Activated CD4-positive, alpha-beta memory T cell treated with anti-CD3 and anti-CD28 coated beads for 36 hours (primary cell): ENCODE measurements at regions of chr3 and their contacts with region 1.

Region 1: GRCh38 chr3:170055209-170055608 is 17.4 kb downstream of the GPR160 start:
- DNase-seq: peak; percentile 50
- H3K4me3 Mint-ChIP-seq: no peak overlapping the region
- H3K27ac Mint-ChIP-seq: no peak overlapping the region
- H3K4me1 Mint-ChIP-seq: peaks cover 41% of the 10 kb centered on the region
- H3K27me3 Mint-ChIP-seq: no peaks in the 10 kb centered on the region

Region 2: DNA sequence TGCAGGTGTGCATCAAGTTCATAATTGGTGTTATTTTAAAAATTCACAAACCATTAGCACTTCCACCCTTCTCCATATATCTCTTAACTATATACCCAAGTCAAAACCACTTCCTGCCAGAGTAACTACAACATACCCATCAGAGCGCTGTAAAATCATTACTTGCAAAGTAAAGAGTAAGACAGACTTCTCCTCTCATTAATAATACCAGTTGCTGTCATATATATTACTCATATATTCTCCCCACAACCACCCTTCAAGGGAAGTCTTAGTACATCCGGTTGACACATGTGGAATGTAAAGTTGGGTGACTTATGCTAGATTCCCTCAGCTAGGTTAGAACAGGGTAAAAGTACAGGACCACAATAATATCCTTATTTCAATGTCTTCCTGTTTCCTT is 296.0 kb before region 1 on chr3:
- CTCF ChIA-PET with region 1: no interaction called
- POLR2A ChIA-PET with region 1: no interaction called
- intact Hi-C with region 1: loop called (anchors 1 kb)
- DNase-seq: no peak
- H3K4me3 Mint-ChIP-seq: peak overlapping the region; percentile 12
- H3K27ac Mint-ChIP-seq: peak overlapping the region; percentile 76
- H3K4me1 Mint-ChIP-seq: peaks cover 30% of the 10 kb centered on the region
- H3K27me3 Mint-ChIP-seq: no peaks in the 10 kb centered on the region

Region 3: DNA sequence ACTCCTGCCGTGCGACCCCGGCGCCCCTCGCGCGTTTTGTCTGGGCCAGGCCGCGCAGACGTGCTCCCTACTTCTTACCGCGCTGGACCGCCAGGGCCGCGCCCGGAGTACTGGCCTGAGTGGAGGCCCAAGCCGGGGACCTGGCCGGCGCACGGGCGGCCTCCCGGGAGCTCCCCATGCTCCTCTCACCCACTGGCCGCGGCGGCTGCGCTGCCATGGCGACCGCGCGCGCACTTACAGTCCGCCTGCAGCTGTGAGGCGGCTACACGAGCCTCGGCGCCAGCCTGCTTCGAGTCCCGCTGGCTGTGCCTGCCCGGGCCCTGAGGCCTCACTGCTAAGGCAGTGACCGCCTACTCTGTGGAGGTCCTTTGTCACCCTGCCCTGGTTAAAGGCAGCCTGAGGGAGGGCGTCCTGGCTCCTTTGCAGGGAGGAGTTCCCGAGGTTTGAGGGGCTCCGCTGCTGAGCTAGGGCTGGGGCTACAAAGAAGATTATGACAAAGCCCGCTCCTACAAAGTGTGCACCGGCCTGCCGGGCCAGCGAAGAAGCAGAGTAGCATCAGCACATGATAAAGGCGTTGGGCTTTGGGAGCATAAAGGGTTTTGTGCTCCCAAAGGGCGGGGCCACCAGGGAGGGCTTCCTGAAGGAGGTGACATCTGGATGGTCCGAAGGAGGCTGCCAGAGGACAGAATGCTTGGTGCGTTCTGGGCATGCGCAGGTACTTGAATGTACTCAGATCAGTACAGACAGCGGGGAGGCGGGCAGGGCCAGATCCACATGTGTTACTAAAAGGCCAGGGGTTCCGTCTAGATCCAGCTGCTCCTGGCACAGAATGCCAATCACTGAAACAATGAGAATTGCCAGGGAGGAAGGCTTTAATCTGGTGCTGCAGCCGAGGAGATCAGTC is 242.6 kb before region 1 on chr3 and contains the starts of genes LRRC34 and LRRIQ4:
- CTCF ChIA-PET with region 1: no interaction called
- POLR2A ChIA-PET with region 1: no interaction called
- intact Hi-C with region 1: loop called (anchors 5 kb)
- DNase-seq: peak; percentile 88
- H3K4me3 Mint-ChIP-seq: peak within 1 kb of the TSS; percentile 75
- H3K27ac Mint-ChIP-seq: peak within 1 kb of the TSS; percentile 43
- H3K4me1 Mint-ChIP-seq: peaks cover 19% of the 10 kb centered on the region
- H3K27me3 Mint-ChIP-seq: no peaks in the 10 kb centered on the region
- total RNA-seq, gene LRRC34: 2.8 to 2.9 TPM
- total RNA-seq, gene LRRIQ4: 0.14 TPM in 1 of 2 experiments, not detected in the other

Region 4: DNA sequence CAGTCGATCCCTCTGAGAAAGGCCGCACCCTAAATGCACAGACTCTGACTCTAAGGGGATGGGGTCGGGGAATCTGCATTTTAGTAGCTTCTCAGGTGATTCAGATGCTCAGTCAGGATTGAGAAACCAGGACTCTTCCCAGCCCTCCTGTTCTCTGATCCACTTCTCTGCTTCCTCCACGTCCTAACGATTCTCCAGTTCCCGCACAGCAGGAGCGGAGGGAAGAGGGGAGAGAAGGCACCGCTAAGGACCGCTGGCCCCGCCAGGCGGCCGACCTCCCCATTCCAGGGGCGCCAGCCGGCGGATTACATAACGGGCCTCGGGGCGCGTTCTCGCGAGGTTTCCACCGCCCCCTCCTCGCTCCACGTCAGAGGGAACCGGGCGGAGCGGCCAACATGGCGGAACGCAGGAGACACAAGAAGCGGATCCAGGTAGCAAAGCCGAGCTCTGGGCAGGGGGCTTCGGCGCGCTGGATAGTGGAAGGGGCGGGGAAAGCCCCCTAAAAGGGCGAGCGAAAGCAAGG is 88.7 kb before region 1 on chr3 and contains the start of gene SEC62:
- CTCF ChIA-PET with region 1: interaction called, 5 read pairs
- POLR2A ChIA-PET with region 1: interaction called, 4 read pairs
- intact Hi-C with region 1: loop called (anchors 1 kb)
- DNase-seq: peak; percentile 97
- H3K4me3 Mint-ChIP-seq: peak within 1 kb of the TSS; percentile 80
- H3K27ac Mint-ChIP-seq: peak within 1 kb of the TSS; percentile 96
- H3K4me1 Mint-ChIP-seq: peaks cover 59% of the 10 kb centered on the region
- H3K27me3 Mint-ChIP-seq: no peaks in the 10 kb centered on the region
- total RNA-seq, gene SEC62: 59.7 to 60.7 TPM

Region 5: DNA sequence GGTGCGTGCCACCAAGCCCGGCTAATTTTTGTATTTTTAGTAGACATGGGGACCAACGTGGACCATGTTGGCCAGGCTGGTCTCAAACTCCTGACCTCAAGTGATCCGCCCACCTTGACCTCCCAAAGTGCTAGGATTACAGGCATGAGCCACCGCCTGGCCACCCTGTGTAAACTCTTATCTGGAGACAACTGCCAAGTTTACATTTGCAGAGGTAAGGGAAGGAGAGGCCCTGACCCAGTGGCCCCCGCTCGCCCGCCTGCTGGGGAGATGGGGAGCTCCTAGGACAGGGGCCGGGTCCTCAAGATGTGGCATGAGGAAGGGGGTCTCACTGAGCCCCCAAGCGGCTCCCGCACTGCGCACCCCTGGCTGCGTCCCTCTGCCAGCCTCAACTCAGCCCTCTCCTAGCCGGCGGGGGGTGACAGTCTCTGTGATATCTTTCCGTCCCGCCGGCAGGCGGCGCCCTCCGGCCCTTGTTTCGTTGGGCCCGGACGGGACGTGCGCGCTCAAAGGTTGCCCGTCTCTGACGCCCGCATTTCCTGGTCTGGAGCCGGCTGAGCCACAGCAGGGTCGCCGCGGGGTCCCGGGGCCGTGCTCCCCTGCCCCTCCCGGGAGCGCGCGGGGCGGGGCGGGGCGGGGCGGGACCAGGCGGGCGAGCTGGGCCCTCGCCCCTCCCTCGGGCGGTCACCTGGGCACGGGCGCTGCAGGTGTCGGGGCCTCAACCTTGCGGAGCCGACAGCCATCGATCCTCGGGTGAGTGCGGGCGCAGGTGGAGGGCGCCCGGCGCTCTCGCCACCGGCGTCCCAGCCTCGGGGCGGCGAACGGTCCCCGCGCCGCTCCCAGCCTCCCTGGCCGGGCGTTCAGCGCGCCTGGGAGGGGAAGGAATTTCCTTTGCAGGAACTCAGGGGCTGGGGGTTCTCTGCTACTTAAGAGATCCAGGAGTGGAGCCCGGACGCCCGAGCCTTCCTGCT is 17.5 kb before region 1 on chr3 and contains the start of gene GPR160:
- CTCF ChIA-PET with region 1: interaction called, 12 read pairs
- POLR2A ChIA-PET with region 1: interaction called, 3 read pairs
- intact Hi-C with region 1: loop called (anchors 1 kb)
- DNase-seq: peak; percentile 89
- H3K4me3 Mint-ChIP-seq: peak within 1 kb of the TSS; percentile 82
- H3K27ac Mint-ChIP-seq: no peak within 1 kb of the TSS
- H3K4me1 Mint-ChIP-seq: peaks cover 14% of the 10 kb centered on the region
- H3K27me3 Mint-ChIP-seq: no peaks in the 10 kb centered on the region
- total RNA-seq, gene GPR160: 5.7 to 7.0 TPM

Region 6: GRCh38 chr3:170128977-170129431 is 73.8 kb after region 1 on chr3:
- CTCF ChIA-PET with region 1: no interaction called
- POLR2A ChIA-PET with region 1: no interaction called
- intact Hi-C with region 1: loop called (anchors 2 kb)
- DNase-seq: peak; percentile 44
- H3K4me3 Mint-ChIP-seq: no peak overlapping the region
- H3K27ac Mint-ChIP-seq: peak overlapping the region; percentile 64
- H3K4me1 Mint-ChIP-seq: peaks cover 27% of the 10 kb centered on the region
- H3K27me3 Mint-ChIP-seq: no peaks in the 10 kb centered on the region

Region 7: GRCh38 chr3:170357176-170357919 is 302.1 kb after region 1 on chr3 and contains the start of gene SKIL:
- CTCF ChIA-PET with region 1: no interaction called
- POLR2A ChIA-PET with region 1: no interaction called
- intact Hi-C with region 1: loop called (anchors 2 kb)
- DNase-seq: peak; percentile 96
- H3K4me3 Mint-ChIP-seq: peak within 1 kb of the TSS; percentile 77
- H3K27ac Mint-ChIP-seq: peak within 1 kb of the TSS; percentile 94
- H3K4me1 Mint-ChIP-seq: peaks cover 42% of the 10 kb centered on the region
- H3K27me3 Mint-ChIP-seq: no peaks in the 10 kb centered on the region
- total RNA-seq, gene SKIL: 20.9 to 22.7 TPM